H1 (cell line): ENCODE measurements at regions of chr20 and their contacts with region 1.

Region 1: DNA sequence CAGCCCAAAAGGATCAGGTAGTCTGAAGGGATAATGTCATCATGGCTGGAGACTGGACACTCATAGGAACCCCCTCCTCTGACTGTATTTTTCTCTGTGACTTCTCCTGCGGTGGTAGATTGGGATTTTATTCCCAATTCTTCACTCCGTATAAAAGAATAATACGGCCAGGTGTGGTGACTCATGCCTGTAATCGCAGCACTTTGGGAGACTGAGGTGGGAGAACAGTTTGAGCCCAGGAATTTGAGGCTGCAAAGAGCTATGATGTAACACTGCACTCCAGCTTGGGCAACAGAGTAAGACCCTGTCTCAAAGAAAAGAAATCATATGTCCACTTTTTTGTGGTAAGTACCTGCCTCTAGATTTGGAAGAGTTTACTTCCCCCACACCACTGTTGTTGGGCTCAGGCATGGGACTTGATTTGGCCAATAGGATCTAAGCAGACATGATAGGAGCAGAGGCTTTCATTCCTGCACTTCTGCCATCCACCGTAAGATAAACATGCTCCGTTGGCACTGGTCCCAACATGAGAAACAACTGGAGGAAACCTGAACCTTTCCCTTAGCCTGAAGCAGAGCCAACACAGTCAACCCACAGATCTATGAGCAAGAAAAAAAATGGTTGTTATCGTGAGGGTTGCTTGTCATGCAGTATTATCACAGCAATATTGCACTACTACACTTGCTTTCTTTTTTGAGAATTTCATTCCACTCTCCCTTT is 82.0 kb downstream of the JPH2 start:
- DNase-seq: no peak
- H3K4me3 ChIP-seq: no peak overlapping the region
- H3K27ac ChIP-seq: no peak overlapping the region
- H3K4me1 ChIP-seq: no peaks in the 10 kb centered on the region
- H3K27me3 ChIP-seq: no peaks in the 10 kb centered on the region
- CTCF ChIP-seq: no peak
- EP300 ChIP-seq: no peak
- POLR2A ChIP-seq: no peak
- RAD21 ChIP-seq: no peak

Region 2: GRCh38 chr20:43942661-43943290 is 162.2 kb before region 1 on chr20:
- CTCF ChIA-PET with region 1: no interaction called
- POLR2A ChIA-PET with region 1: no interaction called
- DNase-seq: no peak
- H3K4me3 ChIP-seq: no peak overlapping the region
- H3K27ac ChIP-seq: no peak overlapping the region
- H3K4me1 ChIP-seq: peaks cover 0 to 3% (median 0%) of the 10 kb centered on the region in 4 experiments; a peak in 4 of 7 replicates
- H3K27me3 ChIP-seq: no peaks in the 10 kb centered on the region; a peak in 1 of 7 replicates
- CTCF ChIP-seq: no peak
- EP300 ChIP-seq: no peak
- POLR2A ChIP-seq: no peak
- RAD21 ChIP-seq: no peak

Region 3: GRCh38 chr20:44038681-44039123 is 66.3 kb before region 1 on chr20:
- CTCF ChIA-PET with region 1: no interaction called
- POLR2A ChIA-PET with region 1: no interaction called
- DNase-seq: peak in 1 of 2 experiments; percentile 30
- H3K4me3 ChIP-seq: no peak overlapping the region
- H3K27ac ChIP-seq: no peak overlapping the region
- H3K4me1 ChIP-seq: no peaks in the 10 kb centered on the region
- H3K27me3 ChIP-seq: no peaks in the 10 kb centered on the region; a peak in 1 of 7 replicates
- CTCF ChIP-seq: no peak
- EP300 ChIP-seq: no peak
- POLR2A ChIP-seq: no peak
- RAD21 ChIP-seq: no peak

Region 4: DNA sequence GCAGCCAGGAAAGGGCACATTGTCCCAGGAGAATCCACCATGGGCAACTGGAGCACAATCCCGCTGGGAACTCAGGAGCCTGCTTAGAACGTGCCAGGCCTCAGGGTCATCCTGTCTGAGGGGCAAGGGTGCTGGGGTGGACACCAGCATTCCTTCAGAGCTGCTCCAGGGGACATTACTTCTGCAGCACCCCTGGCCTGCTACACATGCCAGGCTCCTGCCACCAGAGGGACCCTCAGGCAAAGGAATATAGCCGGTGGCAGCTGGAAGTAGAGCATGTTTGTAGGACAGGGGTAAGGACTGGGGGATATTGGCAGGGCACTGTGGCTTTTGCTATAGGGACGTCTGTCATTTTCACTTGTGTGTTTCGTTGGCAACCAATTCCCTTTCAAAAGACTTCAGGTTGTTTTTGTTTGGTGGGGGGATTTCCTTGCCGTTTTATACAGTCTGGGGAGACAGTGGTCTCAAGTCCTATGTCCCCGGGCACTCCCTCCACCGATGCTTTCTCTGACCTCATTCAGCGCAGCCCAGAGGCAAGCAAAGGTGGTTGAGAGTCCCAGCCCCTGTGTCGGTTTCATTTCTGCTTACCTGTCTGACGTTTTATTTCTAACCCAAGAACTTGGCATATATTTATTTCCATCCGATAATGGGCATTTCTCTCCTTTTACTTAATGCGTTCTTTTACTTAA is 48.8 kb before region 1 on chr20:
- CTCF ChIA-PET with region 1: no interaction called
- POLR2A ChIA-PET with region 1: no interaction called
- DNase-seq: peak; percentile 29 to 69
- H3K4me3 ChIP-seq: no peak overlapping the region
- H3K27ac ChIP-seq: no peak overlapping the region
- H3K4me1 ChIP-seq: no peaks in the 10 kb centered on the region
- H3K27me3 ChIP-seq: no peaks in the 10 kb centered on the region
- CTCF ChIP-seq: peak; percentile 82 to 91 (median 84)
- EP300 ChIP-seq: no peak
- POLR2A ChIP-seq: no peak
- RAD21 ChIP-seq: peak; percentile 91 to 96

Region 5: GRCh38 chr20:44092551-44093248 is 12.3 kb before region 1 on chr20:
- CTCF ChIA-PET with region 1: interaction called, 17 read pairs
- POLR2A ChIA-PET with region 1: no interaction called
- DNase-seq: no peak
- H3K4me3 ChIP-seq: no peak overlapping the region
- H3K27ac ChIP-seq: no peak overlapping the region
- H3K4me1 ChIP-seq: no peaks in the 10 kb centered on the region
- H3K27me3 ChIP-seq: no peaks in the 10 kb centered on the region
- CTCF ChIP-seq: peak in 2 of 3 experiments; percentile 25 to 44; a peak in 2 of 4 replicates
- EP300 ChIP-seq: no peak
- POLR2A ChIP-seq: no peak
- RAD21 ChIP-seq: peak; percentile 43 to 45